PC-3 (cell line): ENCODE measurements at regions of chr1 and their contacts with region 1.

Region 1: GRCh38 chr1:169941982-169942830 is 48.5 kb upstream of the SCYL3 start:
- DNase-seq: peak; percentile 60
- ATAC-seq: peak; percentile 93
- H3K4me3 ChIP-seq: no peak overlapping the region
- H3K27ac ChIP-seq: peak overlapping the region; percentile 36
- H3K4me1 ChIP-seq: peaks cover 12% of the 10 kb centered on the region
- H3K27me3 ChIP-seq: no peaks in the 10 kb centered on the region
- CTCF ChIP-seq: no peak

Region 2: GRCh38 chr1:169928438-169929209 is 13.6 kb before region 1 on chr1:
- CTCF ChIA-PET with region 1: no interaction called
- POLR2A ChIA-PET with region 1: no interaction called
- intact Hi-C with region 1: no loop called
- DNase-seq: peak; percentile 61
- ATAC-seq: peak; percentile 45; the same call in 1 of the 2 replicates
- H3K4me3 ChIP-seq: no peak overlapping the region
- H3K27ac ChIP-seq: no peak overlapping the region
- H3K4me1 ChIP-seq: peaks cover 17% of the 10 kb centered on the region
- H3K27me3 ChIP-seq: no peaks in the 10 kb centered on the region
- CTCF ChIP-seq: peak; percentile 79

Region 3: GRCh38 chr1:170097449-170097948 is 155.3 kb after region 1 on chr1:
- CTCF ChIA-PET with region 1: no interaction called
- POLR2A ChIA-PET with region 1: no interaction called
- intact Hi-C with region 1: loop called (anchors 1 kb)
- DNase-seq: peak; percentile 24
- ATAC-seq: peak; percentile 90
- H3K4me3 ChIP-seq: no peak overlapping the region
- H3K27ac ChIP-seq: no peak overlapping the region
- H3K4me1 ChIP-seq: 0 out of 2 replicates have a peak, but pooled peaks cover 5% of the 10 kb centered on the region
- H3K27me3 ChIP-seq: no peaks in the 10 kb centered on the region
- CTCF ChIP-seq: no peak